ENCODE measurements at regions of chr1 and their contacts with region 1.

Region 1: GRCh38 chr1:110087812-110088738 is 17.6 kb upstream of the ALX3 start:
- DNase-seq: peak; percentile 60
- ATAC-seq: peak; percentile 76
- H3K4me3 Mint-ChIP-seq: no peak overlapping the region
- H3K27ac Mint-ChIP-seq: no peak overlapping the region
- H3K4me1 Mint-ChIP-seq: peaks cover 33% of the 10 kb centered on the region
- H3K27me3 Mint-ChIP-seq: peaks cover 50% of the 10 kb centered on the region
- CTCF ChIP-seq: peak; percentile 71

Region 2: GRCh38 chr1:110019770-110020169 is 68.3 kb before region 1 on chr1:
- CTCF ChIA-PET with region 1: no interaction called
- POLR2A ChIA-PET with region 1: no interaction called
- DNase-seq: no peak
- ATAC-seq: no peak
- H3K4me3 Mint-ChIP-seq: no peak overlapping the region
- H3K27ac Mint-ChIP-seq: no peak overlapping the region
- H3K4me1 Mint-ChIP-seq: no peaks in the 10 kb centered on the region
- H3K27me3 Mint-ChIP-seq: no peaks in the 10 kb centered on the region
- CTCF ChIP-seq: no peak

Region 3: DNA sequence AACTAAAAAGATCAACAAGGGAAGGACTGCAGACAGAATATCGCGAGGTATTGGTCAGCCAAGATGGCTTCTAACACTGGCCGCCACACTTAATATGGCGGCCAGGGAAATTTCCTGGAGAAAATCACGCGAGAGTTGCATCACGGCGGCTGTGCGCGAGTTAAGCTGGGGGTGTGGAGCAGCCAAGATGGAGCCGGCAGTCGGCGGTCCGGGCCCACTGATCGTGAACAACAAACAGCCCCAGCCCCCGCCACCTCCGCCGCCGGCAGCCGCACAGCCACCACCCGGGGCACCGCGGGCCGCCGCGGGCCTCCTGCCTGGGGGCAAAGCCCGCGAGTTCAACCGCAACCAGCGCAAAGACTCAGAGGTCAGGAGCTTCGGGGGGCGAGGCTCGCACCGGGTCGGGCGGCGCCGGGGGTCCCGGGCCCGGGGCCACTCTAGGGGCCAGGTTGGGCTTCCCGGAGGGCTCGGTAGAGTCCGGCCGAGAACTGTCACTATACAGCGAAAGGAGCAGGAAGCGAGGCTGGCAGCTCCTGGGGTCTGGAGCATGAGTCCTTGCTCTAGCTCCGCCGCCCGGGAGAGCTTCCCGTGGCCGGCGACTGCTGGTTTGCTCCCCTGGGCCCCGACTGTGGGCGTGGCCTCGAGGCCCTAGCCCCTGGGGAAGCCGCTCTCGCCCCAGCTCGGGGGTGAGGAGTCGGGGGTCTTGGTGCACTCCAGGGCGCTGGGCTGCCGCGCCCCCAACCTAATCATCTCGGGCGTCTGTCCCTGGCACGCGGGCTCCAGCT is 53.4 kb before region 1 on chr1 and contains the start of gene STRIP1:
- CTCF ChIA-PET with region 1: interaction called, 11 read pairs
- POLR2A ChIA-PET with region 1: no interaction called
- DNase-seq: peak; percentile 88
- ATAC-seq: peak; percentile 83
- H3K4me3 Mint-ChIP-seq: peak within 1 kb of the TSS; percentile 92
- H3K27ac Mint-ChIP-seq: peak within 1 kb of the TSS; percentile 95
- H3K4me1 Mint-ChIP-seq: peaks cover 33% of the 10 kb centered on the region
- H3K27me3 Mint-ChIP-seq: no peaks in the 10 kb centered on the region
- CTCF ChIP-seq: no peak
- total RNA-seq, gene STRIP1: 36.8 to 42.8 TPM (median 38.2 TPM) in 3 replicates

Region 4: GRCh38 chr1:110060034-110060661 is 27.9 kb before region 1 on chr1:
- CTCF ChIA-PET with region 1: interaction called, 24 read pairs
- POLR2A ChIA-PET with region 1: interaction called, 3 read pairs
- DNase-seq: peak; percentile 81
- ATAC-seq: peak; percentile 87
- H3K4me3 Mint-ChIP-seq: no peak overlapping the region
- H3K27ac Mint-ChIP-seq: no peak overlapping the region
- H3K4me1 Mint-ChIP-seq: no peaks in the 10 kb centered on the region
- H3K27me3 Mint-ChIP-seq: peaks cover 12% of the 10 kb centered on the region
- CTCF ChIP-seq: peak; percentile 96

Region 5: DNA sequence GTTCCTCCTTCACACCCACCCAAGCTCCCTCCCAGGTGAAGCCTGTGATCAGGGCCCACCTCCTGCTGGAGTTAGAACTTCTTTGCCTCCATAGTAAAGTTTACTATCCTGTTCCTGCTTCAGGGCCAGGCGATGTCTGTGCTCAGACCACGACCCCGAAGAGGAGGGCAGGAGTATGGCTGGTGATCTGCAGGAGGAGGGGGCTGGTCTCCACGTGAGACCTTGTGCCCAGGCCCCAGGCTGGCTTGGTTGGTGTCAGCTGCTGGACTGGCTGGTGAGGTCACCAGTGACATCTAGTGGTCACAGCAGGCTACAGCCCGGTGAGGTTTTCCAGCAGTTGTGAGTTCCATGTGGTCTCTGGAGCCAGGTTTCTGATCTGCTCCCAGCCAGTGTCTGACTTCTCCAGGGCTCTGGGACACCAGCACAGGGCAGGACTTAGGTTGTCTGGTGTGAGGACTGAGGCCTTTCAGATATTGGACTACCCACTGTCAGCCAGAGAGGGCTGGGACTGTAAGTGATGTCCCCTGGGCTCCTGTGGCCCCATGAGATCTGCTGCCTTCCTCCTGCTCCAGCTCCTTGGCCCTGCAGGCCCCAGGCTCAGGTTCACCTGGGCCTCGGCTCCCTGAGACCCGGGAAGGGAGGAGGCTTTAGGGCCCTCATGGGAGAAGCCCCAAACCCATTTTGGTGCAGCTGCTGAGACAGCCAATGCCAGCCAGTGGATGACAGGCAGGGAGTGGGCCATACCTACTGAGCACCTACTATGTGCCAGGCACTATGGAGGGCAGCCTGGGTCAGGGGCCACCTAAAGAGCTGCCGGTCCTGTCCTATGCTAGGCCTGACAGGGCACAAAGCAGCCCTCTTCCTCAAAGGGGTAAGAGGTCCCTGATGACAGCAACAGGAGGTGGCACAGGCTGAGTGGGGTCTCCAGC is 18.2 kb after region 1 on chr1:
- CTCF ChIA-PET with region 1: interaction called, 291 read pairs
- POLR2A ChIA-PET with region 1: interaction called, 5 read pairs
- DNase-seq: peak; percentile 83
- ATAC-seq: peak; percentile 97
- H3K4me3 Mint-ChIP-seq: no peak overlapping the region
- H3K27ac Mint-ChIP-seq: no peak overlapping the region
- H3K4me1 Mint-ChIP-seq: no peaks in the 10 kb centered on the region
- H3K27me3 Mint-ChIP-seq: no peaks in the 10 kb centered on the region
- CTCF ChIP-seq: peak; percentile 81

Region 6: GRCh38 chr1:110150330-110151174 is 62.5 kb after region 1 on chr1 and contains the start of gene SLC6A17:
- CTCF ChIA-PET with region 1: interaction called, 17 read pairs
- POLR2A ChIA-PET with region 1: no interaction called
- DNase-seq: peak; percentile 63
- ATAC-seq: peak; percentile 76
- H3K4me3 Mint-ChIP-seq: peak within 1 kb of the TSS; percentile 60
- H3K27ac Mint-ChIP-seq: no peak within 1 kb of the TSS
- H3K4me1 Mint-ChIP-seq: peaks cover 6% of the 10 kb centered on the region
- H3K27me3 Mint-ChIP-seq: peaks cover 47% of the 10 kb centered on the region
- CTCF ChIP-seq: no peak
- total RNA-seq, gene SLC6A17: 0.09 to 0.24 TPM (median 0.16 TPM) in 3 replicates